ENCODE measurements at regions of chrX and their contacts with region 1.

Region 1: DNA sequence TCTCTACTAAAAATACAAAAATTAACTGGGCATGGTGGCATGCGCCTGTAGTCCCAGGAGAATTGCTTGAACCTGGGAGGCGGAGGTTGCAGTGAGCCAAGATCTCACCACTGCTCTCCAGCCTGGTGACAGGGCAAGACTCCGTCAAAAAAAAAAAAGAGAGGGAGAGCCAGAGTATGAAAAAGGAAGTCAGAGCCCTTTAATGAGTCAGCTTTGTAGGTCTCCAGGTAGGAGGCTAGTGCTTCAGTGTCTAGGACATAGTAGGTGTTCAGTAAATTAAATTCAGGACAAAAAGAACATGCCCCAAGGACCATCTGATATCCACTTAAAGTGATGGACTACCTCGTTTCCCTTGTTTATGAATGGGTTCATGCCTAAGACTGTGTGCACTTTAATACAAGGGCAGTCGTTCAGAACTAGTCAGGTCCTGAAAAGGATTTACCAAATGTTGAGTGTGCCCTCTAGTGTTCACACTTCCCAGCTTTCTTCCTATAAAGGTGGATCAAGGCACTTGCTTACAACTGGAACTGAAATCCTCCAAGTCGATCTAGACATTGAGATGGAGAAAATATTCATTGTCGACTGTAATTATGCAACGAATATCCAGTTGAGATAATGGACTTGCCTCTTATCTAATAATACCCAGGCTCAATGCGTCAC is 29.0 kb downstream of the F9 start:
- ATAC-seq: peak in 7 of 8 experiments; percentile 46 to 79 (median 55)
- H3K4me3 ChIP-seq: no peak overlapping the region
- H3K27ac ChIP-seq: no peak overlapping the region
- H3K4me1 ChIP-seq: no peaks in the 10 kb centered on the region

Region 2: GRCh38 chrX:138756234-138756633 is 803.3 kb before region 1 on chrX:
- in situ Hi-C with region 1: loop called in 4 of 9 experiments (anchors 25 kb)
- ATAC-seq: peak; percentile 79 to 95 (median 82)
- H3K4me3 ChIP-seq: no peak overlapping the region
- H3K27ac ChIP-seq: no peak overlapping the region
- H3K4me1 ChIP-seq: peaks cover 3 to 9% of the 10 kb centered on the region in 2 donors

Region 3: DNA sequence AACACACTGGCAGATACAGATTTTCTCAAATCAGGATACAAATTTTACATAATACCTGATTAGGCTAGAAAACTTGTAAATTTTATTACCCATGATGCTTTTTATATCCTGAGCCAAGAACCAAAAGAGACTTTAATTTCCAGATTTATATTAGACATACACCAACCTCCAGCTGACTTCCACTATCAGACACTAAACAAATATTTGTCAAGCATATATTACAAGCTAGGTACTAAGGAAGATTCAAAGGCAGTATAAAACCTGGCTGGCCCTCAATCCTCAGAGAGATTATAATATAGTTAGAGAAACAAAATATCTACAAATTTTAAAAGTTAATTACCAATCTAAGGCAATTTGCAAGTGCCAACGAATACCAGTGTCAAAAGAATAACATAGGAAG is 386.8 kb before region 1 on chrX:
- in situ Hi-C with region 1: no loop called
- ATAC-seq: no peak
- H3K4me3 ChIP-seq: no peak overlapping the region
- H3K27ac ChIP-seq: no peak overlapping the region
- H3K4me1 ChIP-seq: no peaks in the 10 kb centered on the region

Measured in motor neuron (in vitro differentiated cells).